Endothelial cell of umbilical vein (primary cell): ENCODE measurements at regions of chr12 and their contacts with region 1.

Region 1: GRCh38 chr12:30754709-30755394 is at the start of gene CAPRIN2:
- DNase-seq: peak; percentile 95
- H3K4me3 ChIP-seq: peak within 1 kb of the TSS; percentile 7 to 70 (median 53)
- H3K27ac ChIP-seq: peak within 1 kb of the TSS; percentile 38
- H3K4me1 ChIP-seq: peaks cover 15% of the 10 kb centered on the region
- H3K27me3 ChIP-seq: no peaks in the 10 kb centered on the region
- CTCF ChIP-seq: peak in 1 of 2 donors; percentile 20
- POLR2A ChIP-seq: peak; percentile 67
- total RNA-seq, gene CAPRIN2: 25.0 and 29.9 TPM in 2 replicates

Region 2: DNA sequence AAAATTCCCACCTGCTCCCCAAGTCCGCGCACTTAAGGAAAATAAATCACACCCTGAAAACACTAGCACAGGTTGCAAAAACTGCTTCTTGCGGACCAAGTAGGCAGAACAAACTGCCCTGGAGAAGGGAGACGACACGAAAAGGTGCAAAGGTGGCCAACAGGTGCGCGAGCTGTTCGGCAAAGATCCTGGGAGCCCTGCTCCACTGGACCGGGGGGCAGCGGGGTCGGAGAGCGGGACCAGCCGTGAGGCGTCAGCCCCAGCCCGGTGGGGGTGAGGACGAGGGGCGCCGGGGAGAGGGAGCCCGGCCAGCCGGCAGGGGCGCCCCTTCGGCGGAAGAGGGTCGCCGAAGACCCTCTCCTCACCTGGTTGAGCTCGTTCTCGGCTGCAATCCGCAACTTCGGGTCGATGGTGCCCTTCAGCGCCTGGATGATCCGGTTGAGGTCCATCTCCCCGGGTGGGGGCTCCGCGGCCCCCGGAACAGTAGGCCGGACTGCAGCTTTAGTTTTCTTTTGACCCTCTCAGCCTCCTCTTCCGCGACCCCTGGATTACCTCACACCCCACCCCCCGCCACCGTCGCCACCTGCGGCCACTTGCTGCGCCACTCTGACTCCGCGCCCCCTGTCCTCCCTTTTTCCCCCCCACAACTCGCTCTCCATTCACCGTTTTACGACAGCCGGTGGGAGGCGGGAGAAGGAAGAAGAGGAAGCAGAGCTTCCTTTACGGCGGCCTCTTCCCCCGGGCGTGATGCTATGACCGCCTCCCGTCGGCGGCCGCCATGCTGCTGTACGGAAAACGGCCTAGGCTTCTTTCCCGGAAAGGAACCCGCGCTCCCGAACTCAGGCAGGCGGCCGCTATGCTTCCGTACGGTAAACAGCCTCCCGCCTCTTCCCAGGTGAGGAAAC is 59.4 kb before region 1 on chr12 and contains the start of gene IPO8:
- CTCF ChIA-PET with region 1: interaction called, 5 read pairs
- POLR2A ChIA-PET with region 1: interaction called, 5 read pairs
- dilution Hi-C with region 1: no loop called
- intact Hi-C with region 1: loop called (anchors 1 kb)
- DNase-seq: peak; percentile 89
- H3K4me3 ChIP-seq: peak within 1 kb of the TSS; percentile 52 to 96 (median 78)
- H3K27ac ChIP-seq: peak within 1 kb of the TSS; percentile 26
- H3K4me1 ChIP-seq: peaks cover 20% of the 10 kb centered on the region
- H3K27me3 ChIP-seq: no peaks in the 10 kb centered on the region
- CTCF ChIP-seq: peak; percentile 20 to 59
- POLR2A ChIP-seq: peak; percentile 33
- total RNA-seq, gene IPO8: 44.7 and 52.5 TPM in 2 replicates

Region 3: DNA sequence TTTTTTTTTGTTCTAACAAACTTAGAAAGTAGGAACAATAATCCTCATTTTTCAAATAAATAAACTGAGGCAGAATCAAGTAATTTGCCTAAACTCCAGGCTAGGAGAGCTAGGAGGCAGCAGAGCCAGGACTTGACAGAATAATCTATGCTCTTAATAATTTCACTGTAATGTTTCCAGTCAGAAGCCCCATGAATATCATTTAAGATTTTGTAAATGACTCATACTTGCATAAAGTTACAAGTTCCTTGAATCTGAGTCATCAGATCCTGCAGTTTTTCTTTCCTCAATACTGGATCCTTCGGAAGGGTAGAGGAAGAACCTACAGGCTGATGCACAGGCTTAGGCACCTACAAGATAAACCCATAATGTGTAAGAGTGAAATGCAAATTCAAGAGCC is 29.1 kb before region 1 on chr12:
- CTCF ChIA-PET with region 1: interaction called, 11 read pairs
- POLR2A ChIA-PET with region 1: interaction called, 3 read pairs
- dilution Hi-C with region 1: no loop called
- intact Hi-C with region 1: no loop called
- DNase-seq: peak; percentile 73
- H3K4me3 ChIP-seq: no peak overlapping the region
- H3K27ac ChIP-seq: peak overlapping the region; percentile 28
- H3K4me1 ChIP-seq: peaks cover 18% of the 10 kb centered on the region
- H3K27me3 ChIP-seq: no peaks in the 10 kb centered on the region
- CTCF ChIP-seq: no peak
- POLR2A ChIP-seq: no peak

Region 4: GRCh38 chr12:30732954-30733637 is 21.8 kb before region 1 on chr12:
- CTCF ChIA-PET with region 1: interaction called, 13 read pairs
- POLR2A ChIA-PET with region 1: no interaction called
- dilution Hi-C with region 1: no loop called
- intact Hi-C with region 1: no loop called
- DNase-seq: no peak
- H3K4me3 ChIP-seq: no peak overlapping the region
- H3K27ac ChIP-seq: no peak overlapping the region
- H3K4me1 ChIP-seq: no peaks in the 10 kb centered on the region
- H3K27me3 ChIP-seq: no peaks in the 10 kb centered on the region
- CTCF ChIP-seq: no peak
- POLR2A ChIP-seq: no peak

Region 5: DNA sequence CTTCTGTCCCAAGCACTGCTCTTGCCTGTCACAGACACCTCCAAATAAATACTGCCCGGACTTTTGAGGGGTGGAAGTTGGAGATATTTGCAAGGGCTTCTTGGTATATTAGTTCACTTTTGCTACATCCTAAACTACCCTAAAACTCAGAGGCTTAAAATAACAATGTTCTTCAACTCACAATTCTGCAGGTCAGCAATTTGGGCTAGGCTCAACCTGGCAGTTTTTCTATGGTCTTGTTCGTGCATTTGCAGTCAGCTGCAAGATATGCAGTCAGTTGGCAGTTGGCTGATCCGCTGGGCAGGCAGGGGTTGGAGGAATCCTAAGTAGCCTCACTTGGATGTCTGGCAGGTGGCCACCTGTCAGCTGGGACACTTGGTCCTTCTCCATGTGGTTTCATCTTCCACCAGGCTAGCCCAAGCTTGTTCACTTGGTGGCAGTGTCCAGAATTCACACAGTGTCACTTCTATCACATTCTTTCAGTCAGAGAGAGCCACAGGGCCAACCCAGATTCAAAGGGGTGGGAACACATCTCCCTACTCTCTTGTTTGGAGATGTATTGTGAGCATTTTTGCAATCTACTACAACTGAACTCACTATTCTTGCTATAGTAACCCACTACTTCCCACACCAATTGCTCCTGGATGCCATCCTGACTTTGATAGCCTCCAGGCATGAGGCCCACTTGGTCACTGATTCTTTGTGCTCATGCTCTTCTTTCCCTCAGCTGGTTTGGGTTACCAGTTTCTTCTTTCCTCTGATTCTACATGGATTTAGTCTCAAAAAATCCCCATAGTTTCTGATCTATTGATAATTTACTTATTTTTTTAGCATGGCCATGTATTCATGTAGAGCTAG is 27.7 kb after region 1 on chr12:
- CTCF ChIA-PET with region 1: no interaction called
- POLR2A ChIA-PET with region 1: no interaction called
- dilution Hi-C with region 1: no loop called
- intact Hi-C with region 1: no loop called
- DNase-seq: no peak
- H3K4me3 ChIP-seq: no peak overlapping the region
- H3K27ac ChIP-seq: no peak overlapping the region
- H3K4me1 ChIP-seq: no peaks in the 10 kb centered on the region
- H3K27me3 ChIP-seq: no peaks in the 10 kb centered on the region
- CTCF ChIP-seq: no peak
- POLR2A ChIP-seq: no peak